A673 (cell line): ENCODE measurements at regions of chr3 and their contacts with region 1.

Region 1: DNA sequence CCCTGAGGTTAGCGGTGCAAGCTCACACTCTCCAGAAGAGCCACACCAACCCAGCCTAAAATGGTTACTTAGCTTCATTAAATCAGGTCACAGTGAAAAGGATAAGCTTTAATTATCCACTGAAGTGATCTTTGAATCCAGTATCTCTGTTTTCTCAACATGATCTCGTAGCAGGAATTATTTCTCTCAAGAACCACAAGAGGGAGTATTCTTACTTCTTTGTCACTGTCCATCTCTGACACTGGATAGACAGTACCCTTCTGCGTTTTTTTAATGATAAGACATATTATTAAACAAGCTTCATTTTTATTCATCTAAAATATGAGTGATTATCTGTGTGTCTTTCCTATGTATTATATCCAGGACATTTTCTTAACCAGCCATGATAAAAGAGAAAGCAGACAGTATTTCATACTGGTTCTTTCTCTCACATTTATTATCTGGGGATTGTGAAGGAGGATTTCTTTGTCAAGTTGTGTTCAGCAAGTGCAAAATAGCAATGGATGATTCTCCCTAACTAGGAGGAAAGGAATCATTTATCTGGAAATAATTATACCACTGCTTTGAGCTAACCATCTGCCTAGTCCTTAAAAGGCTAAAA is 105.4 kb upstream of the CCDC54 start:
- DNase-seq: peak; percentile 53
- H3K4me3 ChIP-seq: no peak overlapping the region
- H3K27ac ChIP-seq: no peak overlapping the region
- H3K4me1 ChIP-seq: no peaks in the 10 kb centered on the region
- H3K27me3 ChIP-seq: no peaks in the 10 kb centered on the region
- CTCF ChIP-seq: peak; percentile 75

Region 2: GRCh38 chr3:106114220-106114619 is 1157.7 kb before region 1 on chr3:
- CTCF ChIA-PET with region 1: no interaction called
- POLR2A ChIA-PET with region 1: no interaction called
- intact Hi-C with region 1: no loop called
- DNase-seq: no peak
- H3K4me3 ChIP-seq: no peak overlapping the region
- H3K27ac ChIP-seq: no peak overlapping the region
- H3K4me1 ChIP-seq: peaks cover 3% of the 10 kb centered on the region
- H3K27me3 ChIP-seq: no peaks in the 10 kb centered on the region
- CTCF ChIP-seq: no peak

Region 3: GRCh38 chr3:107421170-107421792 is 149.4 kb after region 1 on chr3:
- CTCF ChIA-PET with region 1: interaction called, 8 read pairs
- POLR2A ChIA-PET with region 1: no interaction called
- intact Hi-C with region 1: loop called (anchors 5 kb)
- DNase-seq: peak; percentile 77
- H3K4me3 ChIP-seq: peak overlapping the region; percentile 18
- H3K27ac ChIP-seq: no peak overlapping the region
- H3K4me1 ChIP-seq: no peaks in the 10 kb centered on the region
- H3K27me3 ChIP-seq: no peaks in the 10 kb centered on the region
- CTCF ChIP-seq: peak; percentile 77

Region 4: GRCh38 chr3:107543666-107544065 is 271.8 kb after region 1 on chr3:
- CTCF ChIA-PET with region 1: no interaction called
- POLR2A ChIA-PET with region 1: no interaction called
- intact Hi-C with region 1: loop called (anchors 10 kb)
- DNase-seq: peak; percentile 40
- H3K4me3 ChIP-seq: no peak overlapping the region
- H3K27ac ChIP-seq: no peak overlapping the region
- H3K4me1 ChIP-seq: no peaks in the 10 kb centered on the region
- H3K27me3 ChIP-seq: no peaks in the 10 kb centered on the region
- CTCF ChIP-seq: peak; percentile 59

Region 5: DNA sequence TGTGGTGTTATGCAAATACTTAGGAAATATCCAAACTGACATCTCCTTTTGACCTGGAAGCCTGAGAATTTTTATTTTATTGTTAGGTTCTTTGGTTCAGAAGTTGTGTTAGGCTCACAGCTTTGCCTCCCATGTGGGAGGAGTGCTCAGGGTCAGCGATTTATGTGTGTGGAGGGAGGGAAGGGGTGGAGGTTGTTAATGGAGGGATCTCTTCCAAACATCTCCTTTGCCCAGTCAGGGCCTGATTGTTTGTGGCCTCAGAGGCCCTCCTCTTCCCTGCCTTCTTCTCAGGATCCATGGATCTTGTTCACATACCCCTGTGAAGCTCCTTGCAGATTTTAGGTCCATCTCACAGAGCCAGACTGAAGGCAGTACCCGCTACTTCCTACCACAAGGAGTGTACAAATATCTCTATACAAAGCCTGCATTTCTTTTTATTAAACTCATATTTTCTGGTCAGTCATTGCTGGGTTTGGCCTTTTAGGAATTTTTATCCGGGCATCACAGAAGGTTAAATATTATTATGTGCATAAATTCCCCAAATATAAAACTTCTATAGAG is 291.2 kb after region 1 on chr3:
- CTCF ChIA-PET with region 1: no interaction called
- POLR2A ChIA-PET with region 1: no interaction called
- intact Hi-C with region 1: no loop called
- DNase-seq: no peak
- H3K4me3 ChIP-seq: no peak overlapping the region
- H3K27ac ChIP-seq: no peak overlapping the region
- H3K4me1 ChIP-seq: no peaks in the 10 kb centered on the region
- H3K27me3 ChIP-seq: no peaks in the 10 kb centered on the region
- CTCF ChIP-seq: no peak